CD8-positive, alpha-beta T cell (primary cell): ENCODE measurements at regions of chr9 and their contacts with region 1.

Region 1: GRCh38 chr9:20369391-20369790 is 252.9 kb downstream of the MLLT3 start:
- DNase-seq: peak in 1 of 9 experiments; percentile 19
- ATAC-seq: peak; percentile 29
- H3K4me3 ChIP-seq: no peak overlapping the region
- H3K4me3 Mint-ChIP-seq: no peak overlapping the region
- H3K27ac ChIP-seq: no peak overlapping the region
- H3K27ac Mint-ChIP-seq: peak overlapping the region; percentile 58
- H3K4me1 ChIP-seq: peaks cover 18% of the 10 kb centered on the region
- H3K4me1 Mint-ChIP-seq: peaks cover 53% of the 10 kb centered on the region
- H3K27me3 ChIP-seq: no peaks in the 10 kb centered on the region
- H3K27me3 Mint-ChIP-seq: no peaks in the 10 kb centered on the region
- CTCF ChIP-seq: no peak

Region 2: GRCh38 chr9:20319641-20320337 is 49.6 kb before region 1 on chr9:
- CTCF ChIA-PET with region 1: no interaction called
- POLR2A ChIA-PET with region 1: no interaction called
- intact Hi-C with region 1: no loop called
- DNase-seq: peak in 3 of 9 experiments; percentile 8 to 42 (median 34)
- ATAC-seq: peak; percentile 39
- H3K4me3 ChIP-seq: no peak overlapping the region
- H3K4me3 Mint-ChIP-seq: no peak overlapping the region
- H3K27ac ChIP-seq: peak overlapping the region in 1 of 2 experiments; percentile 50
- H3K27ac Mint-ChIP-seq: peak overlapping the region; percentile 82
- H3K4me1 ChIP-seq: peaks cover 58% of the 10 kb centered on the region
- H3K4me1 Mint-ChIP-seq: peaks cover 89% of the 10 kb centered on the region
- H3K27me3 ChIP-seq: no peaks in the 10 kb centered on the region
- H3K27me3 Mint-ChIP-seq: no peaks in the 10 kb centered on the region
- CTCF ChIP-seq: no peak

Region 3: GRCh38 chr9:20929276-20929675 is 559.9 kb after region 1 on chr9:
- CTCF ChIA-PET with region 1: no interaction called
- POLR2A ChIA-PET with region 1: no interaction called
- intact Hi-C with region 1: loop called in 1 of 2 experiments (anchors 5 kb)
- DNase-seq: no peak
- ATAC-seq: no peak
- H3K4me3 ChIP-seq: no peak overlapping the region
- H3K4me3 Mint-ChIP-seq: no peak overlapping the region
- H3K27ac ChIP-seq: no peak overlapping the region
- H3K27ac Mint-ChIP-seq: no peak overlapping the region
- H3K4me1 ChIP-seq: no peaks in the 10 kb centered on the region
- H3K4me1 Mint-ChIP-seq: peaks cover 9% of the 10 kb centered on the region
- H3K27me3 ChIP-seq: no peaks in the 10 kb centered on the region
- H3K27me3 Mint-ChIP-seq: no peaks in the 10 kb centered on the region
- CTCF ChIP-seq: no peak